ENCODE measurements at regions of chr20 and their contacts with region 1.

Region 1: GRCh38 chr20:31856516-31856915 is 11.1 kb upstream of the FOXS1 start:
- DNase-seq: no peak
- ATAC-seq: no peak
- H3K4me3 ChIP-seq: no peak overlapping the region
- H3K27ac ChIP-seq: no peak overlapping the region
- H3K4me1 ChIP-seq: peaks cover 10 to 15% of the 10 kb centered on the region in 2 experiments; a peak in 3 of 4 replicates
- H3K27me3 ChIP-seq: no peaks in the 10 kb centered on the region; the same call in 1 of the 2 replicates
- CTCF ChIP-seq: no peak
- POLR2A ChIP-seq: no peak
- RAD21 ChIP-seq: no peak

Region 2: GRCh38 chr20:31835977-31836852 is 20.3 kb before region 1 on chr20:
- CTCF ChIA-PET with region 1: interaction called, 17 read pairs
- POLR2A ChIA-PET with region 1: no interaction called
- RAD21 ChIA-PET with region 1: no interaction called
- intact Hi-C with region 1: no loop called
- DNase-seq: peak; percentile 51
- ATAC-seq: peak; percentile 86
- H3K4me3 ChIP-seq: peak overlapping the region in 1 of 2 experiments; percentile 7; a peak in 2 of 4 replicates
- H3K27ac ChIP-seq: no peak overlapping the region; the same call in 1 of the 2 replicates
- H3K4me1 ChIP-seq: peaks cover 17 to 46% of the 10 kb centered on the region in 2 experiments
- H3K27me3 ChIP-seq: no peaks in the 10 kb centered on the region
- CTCF ChIP-seq: no peak
- POLR2A ChIP-seq: no peak
- RAD21 ChIP-seq: no peak

Region 3: GRCh38 chr20:31842471-31843157 is 13.9 kb before region 1 on chr20:
- CTCF ChIA-PET with region 1: interaction called, 17 read pairs
- POLR2A ChIA-PET with region 1: no interaction called
- RAD21 ChIA-PET with region 1: no interaction called
- intact Hi-C with region 1: no loop called
- DNase-seq: no peak
- ATAC-seq: no peak
- H3K4me3 ChIP-seq: no peak overlapping the region
- H3K27ac ChIP-seq: no peak overlapping the region; the same call in 1 of the 2 replicates
- H3K4me1 ChIP-seq: peaks cover 16 to 38% of the 10 kb centered on the region in 2 experiments
- H3K27me3 ChIP-seq: no peaks in the 10 kb centered on the region
- CTCF ChIP-seq: no peak
- POLR2A ChIP-seq: no peak
- RAD21 ChIP-seq: no peak

Region 4: DNA sequence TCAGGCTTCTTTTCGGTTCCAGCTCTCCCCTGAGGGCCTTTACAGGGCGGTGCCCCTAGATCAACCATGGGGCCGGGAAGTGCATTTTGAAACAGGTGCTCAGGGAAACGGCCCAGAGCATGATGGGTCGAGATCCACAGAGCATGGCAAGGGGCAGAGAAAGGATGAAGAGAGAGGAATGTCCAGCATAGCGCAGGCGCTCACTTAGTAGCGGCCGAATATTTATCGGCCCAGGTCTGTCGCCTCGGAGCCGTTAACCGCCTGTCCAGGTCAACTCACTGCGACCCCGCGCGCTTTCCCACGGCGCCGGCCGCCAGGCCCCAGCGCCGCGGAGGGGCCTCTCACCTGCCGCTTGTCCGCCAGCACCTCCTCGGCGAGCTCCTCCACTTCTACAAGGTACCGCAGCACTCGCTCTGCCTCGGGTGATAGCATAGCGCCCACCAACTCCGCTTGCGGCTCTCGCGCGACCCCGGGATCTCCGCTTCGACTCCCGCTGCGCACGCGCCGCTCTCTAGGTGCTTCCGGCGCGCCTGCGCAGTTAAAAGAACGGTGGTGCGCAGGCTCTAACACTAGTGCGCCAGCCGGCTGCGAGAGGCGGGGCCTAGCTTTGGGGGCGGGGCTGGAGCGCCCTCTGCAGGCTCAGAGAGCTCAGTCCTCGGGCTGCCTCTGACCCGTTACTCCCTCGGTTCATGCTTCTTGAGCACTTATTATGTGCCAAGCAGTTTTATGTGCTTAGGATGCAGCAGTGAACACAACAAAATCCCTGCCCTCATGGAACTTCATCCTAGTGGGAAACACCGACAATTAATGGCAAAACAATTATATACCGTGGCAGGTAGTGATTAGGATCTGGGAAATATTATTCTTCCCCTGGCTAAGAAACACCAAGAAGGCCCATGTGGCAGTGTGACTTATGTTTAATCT is 95.3 kb after region 1 on chr20 and contains the start of gene PDRG1:
- CTCF ChIA-PET with region 1: interaction called, 44 read pairs
- POLR2A ChIA-PET with region 1: interaction called, 4 read pairs
- RAD21 ChIA-PET with region 1: interaction called, 9 to 14 read pairs
- intact Hi-C with region 1: loop called (anchors 1 kb)
- DNase-seq: peak; percentile 88
- ATAC-seq: peak; percentile 99
- H3K4me3 ChIP-seq: peak within 1 kb of the TSS; percentile 70 to 99
- H3K27ac ChIP-seq: peak within 1 kb of the TSS; percentile 52; the same call in 1 of the 2 replicates
- H3K4me1 ChIP-seq: peaks cover 0 to 13% of the 10 kb centered on the region in 2 experiments; a peak in 2 of 4 replicates
- H3K27me3 ChIP-seq: peaks cover 10% of the 10 kb centered on the region; the same call in 1 of the 2 replicates
- CTCF ChIP-seq: peak; percentile 88 to 95 (median 92)
- POLR2A ChIP-seq: peak; percentile 69
- RAD21 ChIP-seq: peak; percentile 93
- total RNA-seq, gene PDRG1: 18.7 TPM

Region 5: DNA sequence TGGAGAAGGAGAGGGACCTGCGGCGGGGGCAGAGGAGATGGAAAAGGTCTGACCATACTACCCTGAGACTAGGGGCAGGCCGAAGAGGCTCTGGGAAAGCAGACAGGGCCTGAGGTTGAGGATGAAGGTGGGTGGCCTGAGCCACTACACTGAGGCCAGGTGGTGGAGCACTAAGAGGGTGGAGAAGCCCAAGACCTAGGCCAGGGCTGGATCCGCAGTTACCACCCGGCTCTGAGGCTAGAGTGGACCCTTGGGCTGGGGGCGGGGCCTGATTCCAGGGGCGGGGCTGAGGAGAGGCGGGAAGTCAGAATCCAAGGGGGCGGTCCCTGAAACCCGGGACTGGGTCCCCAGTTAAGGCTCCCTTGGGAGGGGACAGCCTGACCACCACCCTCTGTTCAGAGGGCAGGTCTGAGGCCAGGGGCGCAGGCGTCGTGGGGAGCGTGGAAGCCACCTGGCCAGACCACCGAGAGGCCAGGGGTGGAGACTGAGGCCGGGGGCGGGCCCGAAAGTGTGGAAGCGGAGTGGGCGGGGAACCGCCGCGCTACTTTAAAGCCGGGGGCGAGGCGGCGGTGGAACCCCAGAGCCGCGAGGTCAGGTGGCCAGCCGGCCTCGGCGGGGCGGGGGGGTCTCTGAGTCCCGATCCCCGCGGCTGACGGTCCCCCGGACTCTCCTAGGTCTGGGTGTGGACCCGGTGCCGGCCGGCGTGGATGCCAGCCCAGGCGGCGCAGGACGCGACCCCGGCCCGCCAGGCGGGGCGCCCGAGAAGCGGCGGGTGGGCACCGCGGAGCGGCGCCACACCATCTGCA is 162.0 kb after region 1 on chr20:
- CTCF ChIA-PET with region 1: interaction called, 20 read pairs
- POLR2A ChIA-PET with region 1: no interaction called
- RAD21 ChIA-PET with region 1: interaction called in 1 of 2 experiments, 3 read pairs
- intact Hi-C with region 1: no loop called
- DNase-seq: peak; percentile 81
- ATAC-seq: peak; percentile 85
- H3K4me3 ChIP-seq: peak overlapping the region; percentile 42 to 58
- H3K27ac ChIP-seq: peak overlapping the region; percentile 78
- H3K4me1 ChIP-seq: peaks cover 9 to 24% of the 10 kb centered on the region in 2 experiments
- H3K27me3 ChIP-seq: peaks cover 10% of the 10 kb centered on the region
- CTCF ChIP-seq: no peak
- POLR2A ChIP-seq: peak; percentile 22
- RAD21 ChIP-seq: no peak

Region 6: DNA sequence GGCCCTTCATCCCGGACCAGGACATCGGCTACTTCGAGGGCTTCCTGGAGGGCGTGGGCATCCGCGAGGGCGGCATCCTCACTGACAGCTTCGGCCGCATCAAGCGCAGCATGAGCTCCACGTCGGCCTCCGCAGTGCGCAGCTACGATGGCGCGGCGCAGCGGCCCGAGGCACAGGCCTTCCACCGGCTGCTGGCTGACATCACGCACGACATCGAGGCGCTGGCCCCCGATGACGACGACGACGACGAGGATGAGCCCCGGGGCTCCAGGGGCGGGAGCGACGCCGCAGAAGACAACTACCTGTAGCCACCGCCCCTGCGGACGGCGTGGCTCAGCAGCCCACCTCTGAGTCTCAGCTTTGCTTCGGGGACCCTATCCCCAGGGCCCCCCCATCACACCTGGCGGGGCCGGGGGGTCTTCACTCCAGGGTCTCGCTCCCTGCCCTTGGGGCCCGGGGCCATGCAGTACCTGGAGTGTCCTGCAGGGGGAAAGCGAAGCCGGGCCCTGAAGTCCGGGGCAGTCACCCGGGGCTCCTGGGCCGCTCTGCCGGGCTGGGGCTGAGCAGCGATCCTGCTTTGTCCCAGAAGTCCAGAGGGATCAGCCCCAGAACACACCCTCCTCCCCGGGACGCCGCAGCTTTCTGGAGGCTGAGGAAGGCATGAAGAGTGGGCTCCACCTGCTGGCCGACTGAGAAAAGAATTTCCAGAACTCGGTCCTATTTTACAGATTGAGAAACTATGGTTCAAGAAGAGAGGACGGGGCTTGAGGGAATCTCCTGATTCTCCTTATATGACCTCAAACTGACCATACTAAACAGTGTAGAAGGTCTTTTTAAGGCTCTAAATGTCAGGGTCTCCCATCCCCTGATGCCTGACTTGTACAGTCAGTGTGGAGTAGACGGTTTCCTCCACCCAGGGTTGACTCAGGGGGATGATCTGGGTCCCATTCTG is 174.8 kb after region 1 on chr20:
- CTCF ChIA-PET with region 1: interaction called, 36 read pairs
- POLR2A ChIA-PET with region 1: interaction called, 3 read pairs
- RAD21 ChIA-PET with region 1: interaction called in 1 of 2 experiments, 4 read pairs
- intact Hi-C with region 1: loop called (anchors 1 kb)
- DNase-seq: peak; percentile 84
- ATAC-seq: peak; percentile 99
- H3K4me3 ChIP-seq: no peak overlapping the region
- H3K27ac ChIP-seq: no peak overlapping the region
- H3K4me1 ChIP-seq: peaks cover 4 to 6% of the 10 kb centered on the region in 2 experiments; a peak in 2 of 4 replicates
- H3K27me3 ChIP-seq: peaks cover 25% of the 10 kb centered on the region
- CTCF ChIP-seq: peak; percentile 92 to 99 (median 95)
- POLR2A ChIP-seq: no peak
- RAD21 ChIP-seq: peak; percentile 89

Region 7: DNA sequence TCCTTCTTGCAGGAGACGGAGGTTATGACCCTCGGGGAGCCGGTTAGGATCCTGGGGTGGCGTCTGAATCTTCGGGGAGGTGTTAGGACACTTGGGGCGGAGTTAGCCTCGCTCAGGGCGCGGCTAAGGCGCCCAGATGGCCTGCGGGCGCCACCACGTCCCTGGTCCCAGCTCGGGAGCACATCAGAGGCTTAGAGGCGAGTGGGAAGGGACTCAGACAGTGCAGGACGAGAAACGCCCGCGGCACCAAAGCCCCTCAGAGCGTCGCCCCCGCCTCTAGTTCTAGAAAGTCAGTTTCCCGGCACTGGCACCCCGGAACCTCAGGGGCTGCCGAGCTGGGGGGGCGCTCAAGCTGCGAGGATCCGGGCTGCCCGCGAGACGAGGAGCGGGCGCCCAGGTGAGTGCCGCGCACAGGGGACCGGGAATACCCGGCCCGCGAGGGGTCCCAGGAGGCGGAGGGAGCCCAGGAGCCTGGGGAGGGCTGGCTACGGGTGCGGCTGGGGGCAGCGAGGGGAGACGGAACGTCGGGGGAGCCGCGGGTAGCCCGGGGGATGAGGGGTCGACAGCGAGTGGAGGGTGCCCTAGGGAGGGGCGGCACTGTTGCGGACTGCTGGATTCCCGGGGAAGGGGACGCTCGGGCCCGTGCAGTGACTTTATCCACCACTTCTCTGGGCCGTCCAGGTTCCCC is 195.7 kb after region 1 on chr20 and contains the start of gene HCK:
- CTCF ChIA-PET with region 1: no interaction called
- POLR2A ChIA-PET with region 1: no interaction called
- RAD21 ChIA-PET with region 1: no interaction called
- intact Hi-C with region 1: no loop called
- DNase-seq: no peak
- ATAC-seq: no peak
- H3K4me3 ChIP-seq: no peak within 1 kb of the TSS
- H3K27ac ChIP-seq: no peak within 1 kb of the TSS
- H3K4me1 ChIP-seq: no peaks in the 10 kb centered on the region
- H3K27me3 ChIP-seq: peaks cover 6% of the 10 kb centered on the region; the same call in 1 of the 2 replicates
- CTCF ChIP-seq: no peak
- POLR2A ChIP-seq: no peak
- RAD21 ChIP-seq: no peak
- total RNA-seq, gene HCK: 0.17 TPM

Region 8: DNA sequence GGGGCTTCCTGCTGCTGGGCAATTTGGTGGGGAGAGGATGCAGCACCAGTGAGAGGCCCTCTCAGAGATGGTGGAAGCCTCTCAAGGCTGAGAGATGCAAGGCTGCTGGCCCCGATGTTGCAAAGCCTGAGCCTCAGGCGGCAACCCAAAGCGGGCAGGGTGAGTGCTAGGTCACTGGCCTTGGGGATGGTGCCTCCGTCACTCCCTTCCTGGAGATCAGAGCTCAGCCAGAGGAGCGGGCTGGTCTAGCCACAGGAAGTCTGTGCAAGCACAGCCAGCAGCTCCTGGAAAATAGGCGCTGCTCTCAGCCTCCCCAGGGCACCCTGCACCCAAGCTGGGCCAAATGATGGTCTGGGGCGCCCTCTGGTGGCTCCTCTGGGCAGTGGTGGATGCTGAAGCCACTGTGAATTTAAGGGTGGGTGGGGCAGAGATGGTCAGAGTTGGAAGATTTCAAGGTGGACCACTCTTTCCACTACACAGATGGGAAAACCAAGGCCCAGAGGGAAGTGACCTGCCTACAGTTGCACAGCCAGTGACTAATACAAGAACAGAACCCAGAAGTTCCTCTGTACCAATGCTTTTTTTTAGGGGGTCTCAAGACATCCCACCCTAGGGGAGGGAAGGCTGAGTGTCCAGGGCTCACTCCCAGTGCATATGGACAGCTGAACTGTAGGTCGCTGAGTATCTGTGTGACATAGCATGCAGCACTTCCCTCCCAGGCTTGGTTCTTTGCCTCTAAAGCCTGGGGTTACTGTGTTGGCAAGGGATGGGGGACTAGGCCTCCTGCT is 796.4 kb after region 1 on chr20:
- CTCF ChIA-PET with region 1: interaction called, 10 read pairs
- POLR2A ChIA-PET with region 1: no interaction called
- RAD21 ChIA-PET with region 1: no interaction called
- intact Hi-C with region 1: loop called (anchors 5 kb)
- DNase-seq: peak; percentile 54
- ATAC-seq: peak; percentile 96
- H3K4me3 ChIP-seq: no peak overlapping the region
- H3K27ac ChIP-seq: no peak overlapping the region
- H3K4me1 ChIP-seq: peaks cover 0 to 11% of the 10 kb centered on the region in 2 experiments; a peak in 1 of 4 replicates
- H3K27me3 ChIP-seq: no peaks in the 10 kb centered on the region
- CTCF ChIP-seq: peak; percentile 87 to 91 (median 88)
- POLR2A ChIP-seq: no peak
- RAD21 ChIP-seq: peak; percentile 99

Measured in HCT116 (cell line).